ENCODE measurements at regions of chr20 and their contacts with region 1.

Region 1: DNA sequence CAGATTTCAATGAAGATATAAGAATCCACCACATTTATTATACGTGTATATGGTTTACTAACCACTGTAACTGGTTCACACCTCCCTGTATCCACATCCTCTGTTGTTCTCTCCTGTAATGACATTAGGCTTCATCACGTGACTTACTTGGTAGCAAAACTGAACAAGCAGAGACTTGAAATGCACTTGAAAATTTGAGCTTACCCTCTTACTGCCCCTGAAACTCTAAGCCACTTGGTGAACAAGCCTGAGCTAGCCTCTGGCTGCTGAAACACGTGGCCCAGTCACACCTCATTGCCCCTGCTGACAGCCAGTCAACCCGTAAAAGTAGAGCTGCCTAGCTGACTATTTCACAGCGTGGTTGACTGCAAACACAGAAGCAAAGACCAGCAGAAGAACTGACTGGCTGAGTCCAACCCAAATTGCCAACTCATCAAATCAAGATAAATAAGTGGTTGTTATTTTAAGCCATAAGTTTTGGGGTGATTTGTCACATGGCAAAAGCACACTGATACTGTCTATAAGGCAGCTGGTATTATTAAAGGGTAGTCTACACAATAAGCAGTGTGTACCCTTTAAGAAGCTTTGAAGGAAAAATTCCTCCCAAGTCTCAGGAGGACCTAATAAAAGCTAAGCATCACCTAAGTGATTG is 109.0 kb downstream of the RALGAPA2 start:
- DNase-seq: no peak
- H3K4me3 ChIP-seq: no peak overlapping the region
- H3K27ac ChIP-seq: no peak overlapping the region
- H3K4me1 ChIP-seq: no peaks in the 10 kb centered on the region
- H3K27me3 ChIP-seq: no peaks in the 10 kb centered on the region
- CTCF ChIP-seq: no peak
- EP300 ChIP-seq: no peak
- POLR2A ChIP-seq: no peak

Region 2: GRCh38 chr20:20690676-20691476 is 87.4 kb after region 1 on chr20:
- in situ Hi-C with region 1: no loop called
- intact Hi-C with region 1: loop called (anchors 10 kb)
- DNase-seq: no peak
- H3K4me3 ChIP-seq: no peak overlapping the region
- H3K27ac ChIP-seq: no peak overlapping the region
- H3K4me1 ChIP-seq: peaks cover 0 to 5% (median 0%) of the 10 kb centered on the region in 4 donors
- H3K27me3 ChIP-seq: no peaks in the 10 kb centered on the region
- CTCF ChIP-seq: no peak
- EP300 ChIP-seq: no peak
- POLR2A ChIP-seq: no peak

Measured in transverse colon (tissue), 4 donors.